H1 (cell line): ENCODE measurements at regions of chr7 and their contacts with region 1.

Region 1: DNA sequence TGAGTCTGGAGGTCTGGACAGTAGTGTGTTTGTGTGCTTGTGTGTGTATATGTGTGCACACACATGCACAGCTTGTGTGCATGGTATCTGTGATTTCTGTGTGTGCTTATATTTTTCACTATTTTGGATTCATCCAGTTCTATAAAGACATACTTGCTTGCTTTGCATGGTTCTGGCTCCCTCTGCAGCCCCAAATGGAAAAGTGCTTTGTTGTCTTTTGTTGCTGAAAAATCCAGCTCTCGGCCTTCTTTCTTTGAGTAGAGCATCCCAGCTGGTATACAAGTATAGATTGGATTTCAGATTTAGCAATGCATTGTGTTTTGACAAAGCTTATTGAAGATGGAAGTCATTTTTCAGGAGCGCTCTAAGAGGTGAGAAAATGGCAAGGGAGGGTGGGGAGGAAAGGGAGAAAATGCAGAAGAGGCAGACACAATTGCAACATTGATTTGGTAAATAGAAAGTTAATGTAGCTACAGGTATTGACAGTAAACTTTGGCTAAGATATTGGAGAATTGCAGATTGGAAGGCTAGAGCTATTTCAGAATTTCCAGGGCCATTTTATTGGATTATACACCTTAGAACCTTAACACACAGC is 333.9 kb downstream of the AUTS2 start:
- DNase-seq: no peak
- H3K4me3 ChIP-seq: no peak overlapping the region
- H3K27ac ChIP-seq: no peak overlapping the region
- H3K4me1 ChIP-seq: peaks cover 0 to 6% (median 2%) of the 10 kb centered on the region in 4 experiments; a peak in 1 of 7 replicates
- H3K27me3 ChIP-seq: no peaks in the 10 kb centered on the region
- CTCF ChIP-seq: peak in 2 of 3 experiments; percentile 61 to 78; a peak in 3 of 4 replicates
- EP300 ChIP-seq: no peak
- POLR2A ChIP-seq: no peak
- RAD21 ChIP-seq: peak; percentile 96 to 97

Region 2: DNA sequence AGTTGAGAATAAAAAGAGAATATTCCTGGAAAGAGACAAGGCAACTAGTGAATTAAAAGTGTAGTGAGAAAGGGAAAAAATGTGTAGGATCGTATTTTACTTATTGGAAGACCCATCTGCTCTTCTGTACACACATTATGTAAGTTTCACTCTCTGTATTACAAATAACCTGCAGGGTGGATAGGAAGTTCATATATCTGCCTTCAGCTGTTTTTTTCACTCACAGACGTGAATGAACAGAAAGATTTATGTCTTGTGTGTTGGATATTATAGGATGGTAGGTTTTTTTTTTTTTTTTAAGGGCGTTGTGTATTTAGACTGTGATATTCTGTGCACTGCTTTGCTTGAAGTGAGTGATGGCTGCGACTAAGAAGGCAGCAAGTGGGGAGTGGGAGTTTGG is 67.3 kb before region 1 on chr7:
- CTCF ChIA-PET with region 1: no interaction called
- POLR2A ChIA-PET with region 1: no interaction called
- DNase-seq: no peak
- H3K4me3 ChIP-seq: no peak overlapping the region
- H3K27ac ChIP-seq: no peak overlapping the region
- H3K4me1 ChIP-seq: peaks cover 0 to 9% (median 5%) of the 10 kb centered on the region in 4 experiments; a peak in 4 of 7 replicates
- H3K27me3 ChIP-seq: no peaks in the 10 kb centered on the region
- CTCF ChIP-seq: no peak
- EP300 ChIP-seq: no peak
- POLR2A ChIP-seq: no peak
- RAD21 ChIP-seq: no peak

Region 3: DNA sequence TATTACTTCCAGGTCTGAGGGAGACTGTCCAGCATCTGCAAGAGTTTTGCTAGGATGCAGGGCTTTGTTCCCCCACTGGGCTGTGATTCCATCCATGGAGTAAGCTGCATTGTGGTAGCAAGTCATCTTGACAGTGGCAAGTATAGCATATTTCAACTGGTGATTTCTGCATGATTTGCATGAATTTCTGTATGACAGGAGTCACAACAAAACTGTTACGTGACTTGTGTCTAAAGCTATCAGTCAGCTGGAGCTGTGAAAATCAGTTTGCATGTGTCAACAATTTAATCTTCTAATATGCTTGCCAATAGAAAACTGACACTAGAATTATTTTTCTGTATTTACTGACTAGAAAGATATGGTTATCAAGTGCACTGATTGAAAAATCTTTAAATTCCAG is 10.4 kb after region 1 on chr7:
- CTCF ChIA-PET with region 1: interaction called, 11 read pairs
- POLR2A ChIA-PET with region 1: no interaction called
- DNase-seq: no peak
- H3K4me3 ChIP-seq: no peak overlapping the region
- H3K27ac ChIP-seq: no peak overlapping the region
- H3K4me1 ChIP-seq: 0 out of 7 replicates have a peak, but pooled peaks cover 0 to 2% (median 0%) of the 10 kb centered on the region in 4 experiments
- H3K27me3 ChIP-seq: no peaks in the 10 kb centered on the region
- CTCF ChIP-seq: no peak
- EP300 ChIP-seq: no peak
- POLR2A ChIP-seq: no peak
- RAD21 ChIP-seq: no peak

Region 4: DNA sequence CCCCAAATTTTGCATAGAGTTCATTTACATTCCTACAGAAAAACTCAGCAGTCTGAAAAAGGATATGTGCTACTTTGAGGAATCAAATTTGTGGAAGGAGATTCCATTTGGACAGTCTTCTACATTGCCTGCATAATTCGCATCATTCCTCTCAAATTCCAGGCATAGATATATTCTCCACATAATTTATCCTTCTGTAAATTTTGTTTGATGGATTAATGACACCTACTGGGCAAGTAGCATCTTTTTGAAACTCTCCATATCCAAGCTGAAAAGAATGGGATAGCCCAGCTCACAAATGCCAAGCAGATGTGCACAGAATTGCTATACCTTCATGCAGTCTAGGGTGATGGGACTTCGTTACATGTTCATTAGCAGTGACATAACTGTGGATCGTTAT is 181.4 kb after region 1 on chr7:
- CTCF ChIA-PET with region 1: no interaction called
- POLR2A ChIA-PET with region 1: no interaction called
- DNase-seq: no peak
- H3K4me3 ChIP-seq: no peak overlapping the region
- H3K27ac ChIP-seq: no peak overlapping the region
- H3K4me1 ChIP-seq: peaks cover 0 to 2% (median 0%) of the 10 kb centered on the region in 4 experiments; a peak in 1 of 7 replicates
- H3K27me3 ChIP-seq: no peaks in the 10 kb centered on the region
- CTCF ChIP-seq: no peak
- EP300 ChIP-seq: no peak
- POLR2A ChIP-seq: no peak
- RAD21 ChIP-seq: no peak